Vagina (tissue), 2 donors: ENCODE measurements at regions of chr6 and their contacts with region 1.

Region 1: GRCh38 chr6:120122401-120122800 is 772.8 kb upstream of the MAN1A1 start:
- DNase-seq: no peak
- H3K4me3 ChIP-seq: no peak overlapping the region
- H3K27ac ChIP-seq: no peak overlapping the region
- H3K4me1 ChIP-seq: no peaks in the 10 kb centered on the region
- H3K27me3 ChIP-seq: no peaks in the 10 kb centered on the region
- CTCF ChIP-seq: no peak
- POLR2A ChIP-seq: no peak

Region 2: GRCh38 chr6:118333772-118334171 is 1788.6 kb before region 1 on chr6:
- intact Hi-C with region 1: loop called (anchors 5 kb)
- DNase-seq: no peak
- H3K4me3 ChIP-seq: no peak overlapping the region
- H3K27ac ChIP-seq: no peak overlapping the region
- H3K4me1 ChIP-seq: no peaks in the 10 kb centered on the region
- H3K27me3 ChIP-seq: no peaks in the 10 kb centered on the region
- CTCF ChIP-seq: no peak
- POLR2A ChIP-seq: no peak